Activated T-helper 1 cell treated with anti-CD3 and anti-CD28 coated beads, Interleukin-12 subunit alpha, Interleukin-12 subunit beta, Interleukin-2, Interleukin-4 antibody, amounts not matched to agents 30 ng/mL and 10 ng/mL and 1 ng/mL, durations not matched to agents 14 hours and 24 hours and 36 hours (primary cell): ENCODE measurements at regions of chr5 and their contacts with region 1.

Region 1: GRCh38 chr5:150449517-150450339 is at the start of gene RPS14:
- DNase-seq: peak; percentile 91
- H3K4me3 Mint-ChIP-seq: peak within 1 kb of the TSS; percentile 92
- H3K27ac Mint-ChIP-seq: peak within 1 kb of the TSS; percentile 100
- H3K4me1 Mint-ChIP-seq: peaks cover 40% of the 10 kb centered on the region
- H3K27me3 Mint-ChIP-seq: peaks cover 2% of the 10 kb centered on the region
- total RNA-seq, gene RPS14: 2,328 and 2,429 TPM in 2 replicates

Region 2: GRCh38 chr5:150000256-150000989 is 449.3 kb before region 1 on chr5 and contains the starts of genes HMGXB3 and TIGD6:
- intact Hi-C with region 1: loop called (anchors 2 kb)
- DNase-seq: peak; percentile 82
- H3K4me3 Mint-ChIP-seq: peak within 1 kb of the TSS; percentile 99
- H3K27ac Mint-ChIP-seq: peak within 1 kb of the TSS; percentile 98
- H3K4me1 Mint-ChIP-seq: peaks cover 52% of the 10 kb centered on the region
- H3K27me3 Mint-ChIP-seq: no peaks in the 10 kb centered on the region
- total RNA-seq, gene HMGXB3: 49.1 and 49.9 TPM in 2 replicates
- total RNA-seq, gene TIGD6: 2.4 TPM in 2 replicates

Region 3: GRCh38 chr5:150409638-150410523 is 39.8 kb before region 1 on chr5:
- intact Hi-C with region 1: loop called (anchors 1 kb)
- DNase-seq: peak; percentile 38
- H3K4me3 Mint-ChIP-seq: peak overlapping the region; percentile 91
- H3K27ac Mint-ChIP-seq: peak overlapping the region; percentile 98
- H3K4me1 Mint-ChIP-seq: peaks cover 45% of the 10 kb centered on the region
- H3K27me3 Mint-ChIP-seq: no peaks in the 10 kb centered on the region

Region 4: DNA sequence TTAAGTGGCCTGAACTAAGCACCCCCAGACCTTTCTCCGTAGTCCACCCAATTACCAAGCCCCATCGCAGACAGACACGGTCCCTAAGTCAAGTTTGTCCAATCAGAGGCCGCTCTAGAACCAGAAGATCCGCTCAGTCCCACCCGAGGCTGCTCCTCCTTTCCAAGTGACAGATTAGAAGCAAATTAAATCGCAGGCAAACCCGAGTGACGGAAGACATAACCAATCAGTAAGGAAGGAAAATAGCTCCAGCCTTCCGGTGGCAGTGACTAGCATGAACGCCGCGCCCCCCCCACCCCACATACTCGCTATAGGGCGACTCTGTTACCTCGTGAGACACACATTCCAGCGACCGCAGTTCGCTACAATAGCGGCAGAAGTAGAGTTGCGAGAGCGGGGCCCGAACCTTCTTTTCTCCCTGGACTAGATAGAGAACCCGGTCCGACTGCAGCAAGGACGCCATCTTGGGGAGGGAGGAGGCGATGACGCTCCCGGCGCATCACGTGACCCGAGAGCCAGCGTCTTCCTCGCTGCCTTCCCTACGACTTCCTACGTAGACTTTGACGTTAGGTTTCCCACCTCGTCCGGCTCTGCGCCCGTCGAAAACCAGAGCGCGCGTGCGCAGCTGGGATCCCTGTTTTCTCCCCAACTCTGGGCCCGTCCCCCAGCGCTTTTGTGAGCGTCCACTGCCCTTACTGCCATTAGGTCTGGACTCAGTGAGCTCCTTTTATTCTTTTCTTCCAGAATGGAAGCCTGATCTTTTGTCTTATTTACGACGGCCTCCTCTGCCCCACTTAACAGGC is 309.0 kb after region 1 on chr5 and contains the start of gene DCTN4:
- intact Hi-C with region 1: loop called (anchors 2 kb)
- DNase-seq: peak; percentile 90
- H3K4me3 Mint-ChIP-seq: no peak within 1 kb of the TSS
- H3K27ac Mint-ChIP-seq: no peak within 1 kb of the TSS
- H3K4me1 Mint-ChIP-seq: peaks cover 34% of the 10 kb centered on the region
- H3K27me3 Mint-ChIP-seq: peaks cover 2% of the 10 kb centered on the region
- total RNA-seq, gene DCTN4: 42.3 and 46.4 TPM in 2 replicates

Region 5: GRCh38 chr5:151213800-151214613 is 764.3 kb after region 1 on chr5:
- intact Hi-C with region 1: loop called (anchors 5 kb)
- DNase-seq: peak; percentile 83
- H3K4me3 Mint-ChIP-seq: peak overlapping the region; percentile 87
- H3K27ac Mint-ChIP-seq: peak overlapping the region; percentile 93
- H3K4me1 Mint-ChIP-seq: peaks cover 81% of the 10 kb centered on the region
- H3K27me3 Mint-ChIP-seq: no peaks in the 10 kb centered on the region